AG04449 (cell line): ENCODE measurements at regions of chr16 and their contacts with region 1.

Region 1: DNA sequence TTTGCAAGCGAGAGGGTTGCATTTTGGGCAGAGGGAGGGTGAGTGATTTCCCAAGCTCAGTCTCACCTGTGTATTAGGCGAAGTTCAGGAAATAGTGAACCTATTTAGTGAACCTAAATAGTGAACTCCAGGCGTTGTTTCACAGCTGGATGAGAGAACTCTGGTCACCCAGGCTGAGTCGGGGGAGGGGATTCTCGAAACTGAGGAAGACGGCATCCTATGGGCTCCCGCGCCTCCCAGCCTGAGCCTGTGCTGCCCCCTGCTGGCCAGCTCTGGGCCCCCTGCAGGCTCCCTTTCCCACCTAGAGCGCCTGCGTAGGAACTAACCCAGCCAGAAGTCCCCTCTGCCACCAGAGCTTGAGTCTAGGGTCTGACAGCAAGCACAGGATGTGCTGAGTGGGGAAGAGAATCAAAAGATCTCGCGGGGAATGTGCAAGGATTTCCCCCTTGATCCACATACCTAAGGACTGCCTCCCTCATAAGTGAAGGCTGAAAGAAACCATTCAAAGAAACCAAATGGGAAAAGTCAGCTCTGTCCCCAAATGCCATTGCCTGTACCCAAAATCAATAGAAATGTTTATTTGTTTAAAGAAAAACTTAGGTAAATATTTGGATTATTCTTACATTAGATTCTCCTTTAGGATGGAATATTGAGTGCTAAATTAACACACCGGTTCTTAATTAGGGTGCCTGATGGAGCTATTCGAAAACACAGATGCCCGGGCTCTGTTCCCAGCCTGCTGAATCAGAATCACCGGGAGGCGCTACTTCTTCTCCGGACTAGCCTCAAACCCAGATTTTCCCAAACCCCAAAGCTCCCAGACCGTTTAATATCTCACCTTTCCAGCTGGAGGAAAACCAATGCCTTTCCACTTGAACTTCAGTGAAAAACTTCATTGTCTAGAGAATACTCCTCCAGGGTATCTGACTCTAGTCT is 14.8 kb upstream of the MARVELD3 start:
- DNase-seq: no peak
- H3K4me3 ChIP-seq: no peak overlapping the region
- CTCF ChIP-seq: peak; percentile 93

Region 2: GRCh38 chr16:71412270-71413160 is 198.7 kb before region 1 on chr16:
- CTCF ChIA-PET with region 1: interaction called, 15 read pairs
- POLR2A ChIA-PET with region 1: no interaction called
- DNase-seq: no peak
- H3K4me3 ChIP-seq: no peak overlapping the region
- CTCF ChIP-seq: peak; percentile 81

Region 3: GRCh38 chr16:71441348-71441781 is 169.8 kb before region 1 on chr16:
- CTCF ChIA-PET with region 1: no interaction called
- POLR2A ChIA-PET with region 1: no interaction called
- DNase-seq: no peak
- H3K4me3 ChIP-seq: no peak overlapping the region
- CTCF ChIP-seq: peak; percentile 60

Region 4: DNA sequence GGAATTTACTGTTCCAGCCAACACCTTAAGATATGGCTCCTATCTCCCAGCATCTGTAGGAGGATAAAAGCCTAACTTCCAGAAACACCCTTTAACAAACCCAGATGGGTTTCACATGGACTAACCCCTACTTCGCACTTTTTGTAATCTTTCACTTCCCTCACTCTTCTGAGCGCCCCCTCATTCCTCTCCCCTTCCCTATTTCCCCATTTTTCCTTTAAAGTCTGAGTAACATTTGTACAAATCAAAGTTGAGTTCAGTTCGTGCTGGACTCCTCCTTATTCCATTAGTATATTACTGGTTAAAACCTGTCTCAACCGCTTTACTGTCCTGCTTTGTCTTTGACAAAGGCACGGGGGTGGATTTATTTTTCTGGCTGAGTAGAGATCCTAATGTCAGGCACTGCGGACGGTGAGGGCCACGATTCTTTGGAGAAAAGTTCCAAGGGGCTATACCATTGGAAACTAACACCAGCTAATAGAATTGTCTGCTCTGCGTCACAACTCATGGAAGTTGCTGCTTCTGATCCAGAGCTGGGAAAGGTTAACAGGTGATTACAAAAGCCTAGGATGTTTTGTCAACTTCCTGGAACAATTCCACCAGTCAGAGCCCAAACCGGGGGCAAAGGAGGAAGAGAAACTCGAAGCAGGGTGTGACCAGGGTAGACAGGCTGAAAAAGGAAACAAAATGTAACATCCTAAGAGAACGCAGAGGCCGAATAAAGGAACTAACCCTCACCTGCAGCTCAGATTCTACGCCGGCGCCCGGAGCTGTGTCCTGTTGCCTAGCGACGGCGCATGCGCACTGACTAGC is 46.8 kb before region 1 on chr16:
- CTCF ChIA-PET with region 1: interaction called, 22 read pairs
- POLR2A ChIA-PET with region 1: no interaction called
- DNase-seq: no peak
- H3K4me3 ChIP-seq: peak overlapping the region; percentile 75
- CTCF ChIP-seq: no peak

Region 5: DNA sequence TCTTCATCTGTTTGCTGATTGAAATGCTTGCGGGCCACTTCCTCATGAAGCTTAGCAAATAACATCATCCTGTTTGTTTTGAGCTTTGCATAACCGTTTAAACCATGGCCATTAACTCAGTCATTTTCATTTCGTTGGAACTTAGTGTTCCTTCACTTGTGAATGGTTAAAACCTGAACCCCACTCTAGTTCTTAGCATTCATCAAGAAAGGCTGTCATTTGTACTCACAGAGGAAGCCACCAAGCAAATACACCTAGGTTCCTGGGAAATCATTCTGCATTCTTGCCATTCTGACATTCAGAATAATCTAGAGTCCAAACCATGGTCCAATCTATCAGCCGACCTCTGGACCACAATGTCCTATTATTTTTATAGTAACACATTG is 25.9 kb before region 1 on chr16:
- CTCF ChIA-PET with region 1: interaction called, 22 read pairs
- POLR2A ChIA-PET with region 1: no interaction called
- DNase-seq: no peak
- H3K4me3 ChIP-seq: no peak overlapping the region
- CTCF ChIP-seq: no peak

Region 6: DNA sequence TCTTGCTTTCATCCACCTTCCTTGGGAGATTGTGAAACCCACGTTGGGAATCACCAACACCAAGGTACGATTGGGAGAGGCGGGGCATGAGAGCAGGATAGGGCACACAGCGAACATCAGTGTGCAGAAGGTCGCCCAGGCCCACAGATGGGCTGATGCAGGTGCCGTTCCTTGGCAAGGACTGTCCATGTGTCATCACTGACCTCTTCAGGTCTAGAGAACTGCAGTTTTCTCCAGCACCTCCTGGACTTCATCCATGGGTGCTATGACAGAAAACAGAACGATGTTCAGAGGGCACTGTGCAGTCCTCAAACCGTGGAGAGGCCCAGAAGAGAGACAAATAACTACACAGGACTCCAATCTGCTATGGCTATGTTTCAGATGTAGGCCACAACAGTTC is 10.4 kb before region 1 on chr16:
- CTCF ChIA-PET with region 1: interaction called, 28 read pairs
- POLR2A ChIA-PET with region 1: no interaction called
- DNase-seq: no peak
- H3K4me3 ChIP-seq: no peak overlapping the region
- CTCF ChIP-seq: no peak

Region 7: GRCh38 chr16:71628810-71629209 is 17.6 kb after region 1 on chr16:
- CTCF ChIA-PET with region 1: interaction called, 43 read pairs
- POLR2A ChIA-PET with region 1: no interaction called
- DNase-seq: no peak
- H3K4me3 ChIP-seq: no peak overlapping the region
- CTCF ChIP-seq: no peak

Region 8: DNA sequence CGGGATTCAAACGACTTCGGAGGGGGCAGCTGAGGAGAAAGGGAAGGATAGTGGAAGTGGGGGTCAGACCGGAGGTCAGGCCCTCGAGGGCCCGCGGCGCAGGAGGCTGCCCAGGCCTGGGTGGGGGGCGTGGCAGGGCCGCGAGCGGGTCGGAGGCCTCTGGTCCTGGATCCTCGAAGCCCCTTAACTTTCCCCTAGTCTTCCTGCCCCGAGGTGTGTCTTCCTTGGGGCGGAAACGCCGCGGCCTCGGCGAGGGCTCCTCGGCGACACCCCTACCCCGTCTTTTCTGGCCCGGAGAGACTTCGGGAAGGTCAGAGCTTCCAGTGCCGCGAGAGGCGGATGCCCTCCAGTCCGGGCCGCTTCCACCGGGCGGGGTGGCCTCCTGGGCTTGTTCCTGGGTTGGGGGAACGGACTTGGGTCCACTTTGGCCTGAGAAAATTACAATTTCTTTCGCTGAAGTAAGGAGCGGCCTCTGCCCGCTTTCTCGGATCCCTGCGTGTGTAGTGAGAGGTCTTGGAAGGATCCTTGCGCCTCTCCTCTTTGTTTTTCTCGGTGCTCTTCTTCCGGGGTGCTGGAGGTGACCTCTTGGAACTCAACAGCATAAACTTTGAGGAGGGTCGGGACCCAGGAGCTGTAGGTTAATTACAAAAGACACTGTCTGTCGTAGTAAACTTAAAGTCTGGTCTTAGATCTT is 284.6 kb after region 1 on chr16:
- CTCF ChIA-PET with region 1: no interaction called
- POLR2A ChIA-PET with region 1: no interaction called
- DNase-seq: no peak
- H3K4me3 ChIP-seq: peak overlapping the region; percentile 90
- CTCF ChIP-seq: no peak